Endothelial cell of umbilical vein (primary cell): ENCODE measurements at regions of chr7 and their contacts with region 1.

Region 1: DNA sequence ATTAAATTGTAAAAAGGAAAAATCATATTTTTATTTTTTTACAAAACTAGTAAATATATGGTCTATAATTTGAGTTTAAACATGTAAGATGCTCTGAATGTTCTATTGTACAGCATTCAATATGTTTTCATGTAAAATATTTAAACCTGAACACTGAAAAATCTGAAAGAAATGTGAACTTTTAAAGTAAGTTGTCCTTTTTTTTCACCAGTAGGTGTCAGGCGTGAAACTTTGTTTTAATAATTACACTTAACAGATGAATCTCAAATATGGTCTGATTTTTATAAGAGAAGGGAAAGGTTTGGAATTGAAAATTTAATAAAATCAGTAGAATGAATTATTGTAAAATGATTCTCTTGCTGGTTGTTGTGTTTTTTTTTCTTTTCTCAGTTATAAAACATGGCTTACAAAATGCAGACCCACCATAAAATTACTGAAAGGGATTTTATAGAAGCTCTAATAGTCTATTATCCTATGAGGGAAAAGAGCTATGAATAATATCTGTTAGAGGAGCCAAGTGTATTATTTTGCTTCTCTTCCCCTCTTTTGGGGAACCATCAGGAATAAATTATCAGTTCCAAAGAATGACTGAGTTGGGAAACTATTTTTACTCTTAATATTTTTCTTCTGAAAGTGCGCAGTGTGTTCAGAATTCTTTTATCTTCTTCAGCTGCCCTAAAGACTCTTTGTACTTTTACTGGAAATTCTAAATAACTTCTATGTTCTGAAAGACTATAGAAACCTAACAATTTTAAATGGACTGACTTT is 217.7 kb upstream of the FZD1 start:
- DNase-seq: peak; percentile 21
- H3K4me3 ChIP-seq: no peak overlapping the region
- H3K27ac ChIP-seq: no peak overlapping the region
- H3K4me1 ChIP-seq: no peaks in the 10 kb centered on the region
- H3K27me3 ChIP-seq: no peaks in the 10 kb centered on the region
- CTCF ChIP-seq: peak in 1 of 2 donors; percentile 13
- POLR2A ChIP-seq: no peak

Region 2: GRCh38 chr7:90736968-90737939 is 309.3 kb before region 1 on chr7:
- CTCF ChIA-PET with region 1: no interaction called
- POLR2A ChIA-PET with region 1: no interaction called
- dilution Hi-C with region 1: no loop called
- intact Hi-C with region 1: no loop called
- DNase-seq: no peak
- H3K4me3 ChIP-seq: no peak overlapping the region
- H3K27ac ChIP-seq: peak overlapping the region; percentile 1
- H3K4me1 ChIP-seq: peaks cover 8% of the 10 kb centered on the region
- H3K27me3 ChIP-seq: no peaks in the 10 kb centered on the region
- CTCF ChIP-seq: no peak
- POLR2A ChIP-seq: no peak

Region 3: GRCh38 chr7:91636129-91636724 is 589.7 kb after region 1 on chr7:
- CTCF ChIA-PET with region 1: no interaction called
- POLR2A ChIA-PET with region 1: no interaction called
- dilution Hi-C with region 1: no loop called
- intact Hi-C with region 1: loop called (anchors 2 kb)
- DNase-seq: peak; percentile 57
- H3K4me3 ChIP-seq: no peak overlapping the region
- H3K27ac ChIP-seq: no peak overlapping the region
- H3K4me1 ChIP-seq: peaks cover 6% of the 10 kb centered on the region
- H3K27me3 ChIP-seq: peaks cover 0 to 3% of the 10 kb centered on the region in 2 experiments
- CTCF ChIP-seq: peak; percentile 58 to 65
- POLR2A ChIP-seq: no peak

Region 4: DNA sequence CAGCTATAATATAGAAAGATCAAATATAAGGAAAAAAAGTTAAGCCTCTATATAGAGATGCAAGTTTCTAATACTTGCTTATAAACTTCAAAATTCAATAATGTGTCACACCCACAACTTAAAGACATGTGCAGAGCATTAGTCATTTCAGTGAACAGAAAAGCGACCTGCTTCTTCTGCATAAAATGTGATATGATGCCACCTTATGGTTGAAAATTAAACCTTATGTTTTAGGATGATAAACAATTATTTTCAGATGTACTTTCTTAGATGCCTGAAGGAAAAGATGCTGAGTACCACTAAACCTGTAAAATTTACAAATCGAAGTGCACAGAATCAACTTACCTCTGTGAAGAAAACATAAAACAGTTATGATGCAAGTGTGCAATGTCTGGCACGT is 738.0 kb after region 1 on chr7:
- CTCF ChIA-PET with region 1: interaction called, 7 read pairs
- POLR2A ChIA-PET with region 1: no interaction called
- dilution Hi-C with region 1: no loop called
- intact Hi-C with region 1: loop called (anchors 1 kb)
- DNase-seq: peak; percentile 37
- H3K4me3 ChIP-seq: no peak overlapping the region
- H3K27ac ChIP-seq: no peak overlapping the region
- H3K4me1 ChIP-seq: no peaks in the 10 kb centered on the region
- H3K27me3 ChIP-seq: peaks cover 3 to 8% of the 10 kb centered on the region in 2 experiments
- CTCF ChIP-seq: peak in 1 of 2 donors; percentile 9
- POLR2A ChIP-seq: no peak